Caki2 (cell line): ENCODE measurements at regions of chr6 and their contacts with region 1.

Region 1: GRCh38 chr6:2103644-2104523 is 141.5 kb downstream of the GMDS start:
- DNase-seq: peak; percentile 85

Region 2: DNA sequence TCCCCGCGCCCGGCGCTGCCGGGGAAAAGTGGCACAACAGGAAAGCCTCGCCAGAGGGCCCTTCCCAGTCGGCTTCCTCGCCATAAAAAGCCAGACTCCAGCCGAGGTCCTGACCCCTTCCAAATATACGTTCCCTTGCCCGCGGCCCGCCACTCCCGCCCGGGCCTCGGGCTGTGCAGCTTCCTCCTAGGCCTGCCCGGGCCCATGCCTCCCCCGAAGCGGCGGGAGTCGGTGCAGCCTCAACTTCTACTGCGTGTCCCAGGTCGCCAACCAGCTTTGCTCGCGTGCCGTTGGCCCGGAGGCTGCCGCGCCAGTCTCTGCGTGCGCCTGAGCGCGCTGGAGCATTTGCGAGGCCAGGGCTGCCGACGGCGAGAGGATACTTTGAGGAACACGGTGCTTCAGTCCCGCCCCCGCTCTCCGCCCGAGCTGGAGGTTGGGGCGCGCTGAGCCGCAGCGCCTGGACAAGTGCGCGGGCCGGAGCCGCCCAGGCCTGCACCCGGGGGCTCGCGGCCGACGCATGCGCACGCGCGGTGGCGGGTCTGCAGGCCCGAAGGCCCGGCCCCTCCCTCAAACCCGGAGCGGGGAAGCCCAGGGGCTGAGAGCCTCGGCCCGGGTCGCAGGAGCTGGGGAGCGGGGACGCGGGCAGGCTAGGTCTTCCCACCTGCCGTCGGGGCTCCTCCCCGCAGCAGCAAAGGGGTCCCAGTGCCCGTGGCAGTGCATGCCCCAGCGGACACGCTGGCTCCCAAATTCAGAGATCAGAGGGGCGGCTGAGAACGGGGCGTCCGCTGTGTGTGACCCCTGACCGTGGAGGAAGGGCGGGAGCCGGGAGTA is 484.0 kb before region 1 on chr6:
- in situ Hi-C with region 1: loop called (anchors 5 kb)
- DNase-seq: no peak

Region 3: GRCh38 chr6:1724616-1725015 is 379.3 kb before region 1 on chr6:
- in situ Hi-C with region 1: no loop called
- DNase-seq: peak; percentile 76

Region 4: DNA sequence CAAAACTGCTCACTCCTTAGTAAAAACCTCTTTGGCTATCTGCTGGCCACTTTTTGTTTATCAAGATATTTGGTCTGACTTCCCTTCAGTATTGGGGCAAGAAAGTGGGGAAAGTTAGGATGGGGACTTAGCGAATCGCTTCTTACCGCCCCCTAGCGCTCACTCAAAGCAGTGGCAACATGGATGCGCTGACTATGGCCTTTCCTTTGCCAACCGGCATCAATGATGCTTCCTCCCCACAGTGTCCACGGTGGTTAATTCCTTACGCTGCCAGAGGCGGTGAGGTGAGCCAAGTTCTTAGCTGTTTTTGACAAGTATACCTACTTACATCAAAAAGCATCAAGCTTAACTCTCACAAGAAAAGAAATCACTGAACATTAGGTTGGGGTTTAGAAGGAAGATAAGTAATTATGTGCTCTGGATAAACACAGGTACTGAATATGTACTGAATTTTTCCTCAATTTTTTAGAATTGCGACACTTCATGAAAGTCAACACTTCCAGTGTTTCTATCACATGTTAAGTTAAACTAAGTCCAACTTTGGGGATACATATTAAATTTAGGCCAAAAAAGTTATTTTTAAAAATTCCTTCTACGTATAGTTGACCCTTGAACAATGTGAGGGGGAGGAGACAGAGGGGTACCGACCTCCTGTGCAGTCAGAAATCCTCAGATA is 54.9 kb after region 1 on chr6:
- in situ Hi-C with region 1: no loop called
- DNase-seq: no peak

Region 5: DNA sequence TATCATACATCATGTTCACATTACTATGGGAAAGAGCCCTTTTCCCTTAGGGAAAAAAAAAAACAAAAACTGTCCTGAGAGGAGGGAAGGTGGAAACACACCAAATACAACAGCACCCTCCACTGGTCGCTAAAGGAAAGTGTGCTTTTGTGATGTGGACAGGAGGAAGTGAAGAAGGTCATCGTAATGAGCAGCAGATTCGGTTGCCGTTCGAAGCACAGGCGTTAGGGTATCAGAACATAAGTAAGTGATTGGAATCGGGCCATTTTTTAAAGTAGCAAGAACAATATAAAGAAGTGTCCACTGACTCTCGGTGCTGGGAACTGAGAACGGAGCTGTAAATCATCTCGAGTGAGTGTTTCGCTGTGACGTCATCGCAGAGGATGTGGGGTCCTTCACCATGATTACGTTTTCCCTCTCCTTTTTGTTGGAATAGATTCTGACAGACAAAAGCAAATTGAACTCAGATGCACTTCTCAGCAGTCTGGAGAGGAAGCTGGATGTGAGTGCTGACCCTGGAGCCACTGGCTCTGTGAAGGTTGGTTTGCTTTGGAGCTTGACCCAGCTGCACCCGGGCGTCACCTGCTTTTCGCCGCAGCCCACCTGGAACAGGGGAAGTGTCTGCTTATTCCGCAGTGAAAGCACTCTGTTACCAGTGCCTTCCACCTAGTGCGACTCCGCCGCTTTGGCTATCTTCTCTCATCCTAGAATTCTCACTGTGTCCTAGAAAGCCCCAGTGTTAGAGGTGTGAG is 345.1 kb after region 1 on chr6:
- in situ Hi-C with region 1: loop called (anchors 25 kb)
- DNase-seq: peak; percentile 76

Region 6: GRCh38 chr6:2634139-2634964 is 530.5 kb after region 1 on chr6:
- in situ Hi-C with region 1: loop called (anchors 5 kb)
- DNase-seq: peak; percentile 92